ENCODE measurements at regions of chr1 and their contacts with region 1.

Region 1: GRCh38 chr1:16078925-16079656 is 5.6 kb upstream of the FAM131C start:
- DNase-seq: peak; percentile 83
- H3K4me3 ChIP-seq: no peak overlapping the region
- H3K27ac ChIP-seq: no peak overlapping the region
- H3K4me1 ChIP-seq: peaks cover 23% of the 10 kb centered on the region
- H3K27me3 ChIP-seq: no peaks in the 10 kb centered on the region

Region 2: GRCh38 chr1:15847100-15847892 is 231.8 kb before region 1 on chr1 and contains the start of gene SPEN:
- in situ Hi-C with region 1: no loop called
- DNase-seq: peak; percentile 98
- H3K4me3 ChIP-seq: peak within 1 kb of the TSS; percentile 89
- H3K27ac ChIP-seq: peak within 1 kb of the TSS; percentile 96
- H3K4me1 ChIP-seq: peaks cover 35% of the 10 kb centered on the region
- H3K27me3 ChIP-seq: no peaks in the 10 kb centered on the region
- total RNA-seq, gene SPEN: 12.5 and 16.5 TPM in 2 replicates

Region 3: GRCh38 chr1:16143566-16144324 is 64.7 kb after region 1 on chr1:
- in situ Hi-C with region 1: no loop called
- DNase-seq: no peak
- H3K4me3 ChIP-seq: no peak overlapping the region
- H3K27ac ChIP-seq: no peak overlapping the region
- H3K4me1 ChIP-seq: peaks cover 56% of the 10 kb centered on the region
- H3K27me3 ChIP-seq: no peaks in the 10 kb centered on the region

Region 4: GRCh38 chr1:16187748-16188401 is 108.8 kb after region 1 on chr1:
- in situ Hi-C with region 1: loop called (anchors 5 kb)
- DNase-seq: peak; percentile 83
- H3K4me3 ChIP-seq: no peak overlapping the region
- H3K27ac ChIP-seq: no peak overlapping the region
- H3K4me1 ChIP-seq: peaks cover 24% of the 10 kb centered on the region
- H3K27me3 ChIP-seq: no peaks in the 10 kb centered on the region

Region 5: DNA sequence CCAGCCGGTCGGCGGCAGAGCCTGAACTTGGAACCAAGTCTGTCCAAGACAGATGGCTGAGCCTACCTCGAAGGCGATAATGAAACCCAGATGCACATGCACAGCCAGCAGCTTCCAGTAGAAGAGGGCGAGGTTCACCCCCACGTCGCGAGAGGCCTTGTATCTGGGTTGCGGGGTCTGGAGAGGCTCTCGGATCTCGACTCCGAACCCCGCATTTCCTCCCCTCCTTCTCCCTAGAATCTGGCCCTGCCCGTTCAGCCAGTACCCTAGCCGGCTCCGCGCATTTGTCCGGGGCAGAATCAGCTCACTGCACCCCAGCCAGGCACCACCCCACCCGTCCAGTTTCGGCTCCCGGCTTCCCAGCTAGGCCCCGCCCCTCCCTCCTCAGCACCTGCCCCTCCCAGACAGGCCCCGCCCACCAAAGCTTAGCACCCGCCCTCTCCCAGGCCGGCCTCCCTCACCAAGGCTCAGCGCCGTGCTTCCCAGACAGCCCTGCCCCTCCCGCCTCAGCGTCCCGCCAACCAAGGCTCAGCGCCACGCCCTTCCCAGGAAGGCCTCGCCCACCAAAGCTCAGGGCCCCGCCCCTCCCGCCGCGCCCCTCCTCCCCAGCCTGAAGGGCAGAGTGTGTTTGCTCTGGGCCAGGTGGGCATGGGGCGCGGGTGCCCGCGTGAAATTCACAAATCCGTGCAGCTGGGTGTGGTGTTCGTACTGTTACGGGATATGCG is 138.1 kb after region 1 on chr1:
- in situ Hi-C with region 1: no loop called
- DNase-seq: peak; percentile 100
- H3K4me3 ChIP-seq: peak overlapping the region; percentile 62
- H3K27ac ChIP-seq: no peak overlapping the region
- H3K4me1 ChIP-seq: no peaks in the 10 kb centered on the region
- H3K27me3 ChIP-seq: no peaks in the 10 kb centered on the region

Region 6: GRCh38 chr1:16243936-16244649 is 165.0 kb after region 1 on chr1:
- in situ Hi-C with region 1: loop called (anchors 10 kb)
- DNase-seq: peak; percentile 89
- H3K4me3 ChIP-seq: no peak overlapping the region
- H3K27ac ChIP-seq: no peak overlapping the region
- H3K4me1 ChIP-seq: peaks cover 15% of the 10 kb centered on the region
- H3K27me3 ChIP-seq: no peaks in the 10 kb centered on the region

Region 7: DNA sequence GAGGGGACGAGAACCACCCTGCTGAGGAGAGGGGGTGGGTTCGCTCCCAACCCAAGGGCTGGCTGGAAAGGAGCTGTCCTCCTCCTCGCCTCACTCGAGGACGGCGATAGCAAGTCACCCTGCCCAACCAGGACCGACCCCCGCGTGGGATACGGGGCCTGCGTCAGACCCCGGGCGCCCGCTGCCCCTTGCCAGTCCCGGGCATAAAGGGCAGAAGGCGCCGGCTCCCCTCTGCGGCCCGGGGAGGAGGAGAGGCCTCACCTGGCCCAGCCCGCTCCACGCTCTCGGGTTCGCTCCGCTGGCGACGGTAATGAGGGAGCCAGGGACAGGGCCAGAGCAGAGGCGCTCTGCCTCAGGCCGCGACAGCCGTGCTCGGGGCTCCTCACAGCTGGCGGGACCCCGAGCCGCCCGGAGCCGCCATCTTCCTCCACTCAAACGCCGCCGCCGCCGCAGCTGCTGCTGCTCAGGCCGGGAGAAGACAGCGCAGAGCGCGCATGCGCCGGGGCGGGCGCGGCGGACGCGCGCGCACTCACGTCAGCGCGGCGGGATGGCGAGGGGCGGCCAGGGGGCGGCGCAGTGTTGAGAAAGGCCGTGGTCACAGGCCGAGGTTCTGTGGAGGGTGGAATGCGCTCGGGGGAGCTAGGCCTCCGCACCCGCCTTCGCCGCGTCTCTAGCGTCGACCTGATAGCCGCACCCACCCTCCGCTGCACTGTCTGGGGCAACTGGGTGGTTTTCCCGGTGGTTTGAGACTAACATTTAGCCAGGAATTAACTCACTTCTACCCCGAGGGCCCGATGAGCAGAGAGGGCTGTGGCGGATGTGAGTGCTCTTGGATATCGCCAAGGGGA is 273.1 kb after region 1 on chr1 and contains the start of gene FBXO42:
- in situ Hi-C with region 1: loop called (anchors 25 kb)
- DNase-seq: peak; percentile 95
- H3K4me3 ChIP-seq: peak within 1 kb of the TSS; percentile 84
- H3K27ac ChIP-seq: peak within 1 kb of the TSS; percentile 83
- H3K4me1 ChIP-seq: peaks cover 33% of the 10 kb centered on the region
- H3K27me3 ChIP-seq: no peaks in the 10 kb centered on the region
- total RNA-seq, gene FBXO42: 20.2 and 27.8 TPM in 2 replicates

Measured in GM23248 (cell line).